ENCODE measurements at regions of chr19 and their contacts with region 1.

Region 1: DNA sequence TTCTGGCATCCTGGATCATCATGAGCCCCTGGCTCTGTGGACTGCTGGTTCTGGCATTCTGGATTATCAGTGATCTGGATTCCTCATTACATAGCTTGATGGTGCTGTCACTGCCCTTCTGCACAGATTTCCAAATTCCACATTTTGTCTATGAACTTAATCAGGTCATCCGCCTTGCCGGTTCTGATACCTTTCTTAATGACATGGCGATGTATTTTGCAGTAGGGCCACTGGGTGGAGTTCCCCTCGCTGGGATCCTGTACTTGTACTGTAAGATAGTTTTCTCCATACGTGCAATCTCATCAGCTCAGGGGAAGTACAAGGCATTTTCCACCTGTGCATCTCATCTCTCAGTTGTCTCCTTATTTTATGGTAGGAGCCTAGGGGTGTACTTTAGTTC is 24.4 kb upstream of the OR7C2 start:
- DNase-seq: no peak
- H3K4me3 ChIP-seq: no peak overlapping the region
- H3K27ac ChIP-seq: no peak overlapping the region
- H3K4me1 ChIP-seq: no peaks in the 10 kb centered on the region
- H3K27me3 ChIP-seq: no peaks in the 10 kb centered on the region
- CTCF ChIP-seq: peak; percentile 19 to 56

Region 2: DNA sequence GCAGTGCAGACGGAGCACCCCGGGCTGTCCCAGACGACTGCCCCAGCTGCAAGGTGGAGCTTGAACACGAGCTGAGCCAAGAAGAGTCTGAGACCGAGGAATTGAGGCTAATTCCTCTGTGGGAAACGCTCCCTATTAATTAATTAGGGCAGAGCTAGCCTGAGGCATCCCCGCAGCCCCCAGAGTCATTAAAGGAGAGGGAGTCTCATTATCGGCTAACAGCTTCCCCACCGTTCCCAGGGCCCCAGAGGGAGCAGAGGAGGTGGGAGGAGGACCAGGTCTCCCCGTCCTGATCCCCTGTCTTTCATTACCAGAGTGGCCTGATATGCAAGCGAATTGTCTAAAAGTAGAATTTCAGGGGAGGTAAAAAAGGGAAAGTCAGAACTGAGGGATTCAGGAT is 75.9 kb after region 1 on chr19:
- CTCF ChIA-PET with region 1: no interaction called
- dilution Hi-C with region 1: no loop called
- in situ Hi-C with region 1: no loop called
- intact Hi-C with region 1: no loop called
- DNase-seq: no peak
- H3K4me3 ChIP-seq: no peak overlapping the region
- H3K27ac ChIP-seq: no peak overlapping the region
- H3K4me1 ChIP-seq: no peaks in the 10 kb centered on the region
- H3K27me3 ChIP-seq: no peaks in the 10 kb centered on the region
- CTCF ChIP-seq: no peak

Region 3: GRCh38 chr19:15022752-15023151 is 105.9 kb after region 1 on chr19:
- CTCF ChIA-PET with region 1: no interaction called
- dilution Hi-C with region 1: no loop called
- in situ Hi-C with region 1: no loop called
- intact Hi-C with region 1: loop called (anchors 1 kb)
- DNase-seq: no peak
- H3K4me3 ChIP-seq: peak overlapping the region in 1 of 3 experiments; percentile 8
- H3K27ac ChIP-seq: no peak overlapping the region
- H3K4me1 ChIP-seq: peaks cover 4% of the 10 kb centered on the region
- H3K27me3 ChIP-seq: no peaks in the 10 kb centered on the region
- CTCF ChIP-seq: no peak